Right lobe of liver (tissue), 6 donors: ENCODE measurements at regions of chr20 and their contacts with region 1.

Region 1: DNA sequence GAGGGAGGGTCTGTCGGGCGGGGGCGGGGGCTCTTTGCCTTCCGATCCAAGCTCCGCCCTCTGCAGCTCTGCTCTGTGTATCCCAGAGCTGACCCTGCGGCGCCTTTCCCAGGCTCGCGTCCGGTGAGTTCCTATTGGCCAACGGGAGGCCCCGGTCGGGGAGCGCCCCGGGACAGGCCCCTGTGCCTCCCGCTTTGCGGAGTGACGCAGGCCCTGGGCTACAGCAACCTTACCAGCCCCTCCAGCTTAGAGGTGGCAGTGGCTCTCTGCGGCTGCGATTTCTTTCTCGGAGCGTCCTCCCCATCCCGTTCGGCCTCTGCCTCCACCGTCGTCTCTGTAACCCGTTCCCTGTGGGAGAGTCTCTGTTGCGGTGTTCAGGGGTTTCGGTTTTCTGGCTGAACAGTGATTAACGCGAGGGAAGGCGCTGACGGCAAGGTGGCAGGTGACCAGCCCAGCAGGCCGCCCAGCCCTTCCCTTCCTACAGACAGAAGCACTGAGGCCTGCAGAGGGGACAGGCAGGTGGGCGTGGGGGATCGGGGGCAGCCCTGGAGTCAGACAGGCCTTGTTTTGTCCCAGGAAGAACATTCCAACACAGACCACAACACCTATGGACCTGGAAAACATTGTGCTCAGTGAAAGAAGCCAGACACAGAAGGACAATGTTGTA is 18.1 kb upstream of the CEBPB start:
- DNase-seq: peak; percentile 94 to 96 (median 96)
- ATAC-seq: peak; percentile 93 to 98 (median 96)
- H3K4me3 ChIP-seq: peak overlapping the region; percentile 46 to 64 (median 59)
- H3K27ac ChIP-seq: peak overlapping the region; percentile 86 to 95 (median 91)
- H3K4me1 ChIP-seq: peaks cover 0 to 8% (median 3%) of the 10 kb centered on the region in 4 donors
- H3K27me3 ChIP-seq: no peaks in the 10 kb centered on the region
- CTCF ChIP-seq: no peak
- POLR2A ChIP-seq: peak; percentile 87

Region 2: GRCh38 chr20:49982346-49983122 is 189.9 kb before region 1 on chr20 and contains the start of gene SNAI1:
- intact Hi-C with region 1: loop called in 1 of 2 experiments (anchors 10 kb)
- DNase-seq: peak; percentile 78 to 90 (median 87)
- ATAC-seq: peak; percentile 84 to 90 (median 86)
- H3K4me3 ChIP-seq: peak within 1 kb of the TSS; percentile 37 to 47 (median 46)
- H3K27ac ChIP-seq: peak within 1 kb of the TSS; percentile 47 to 73 (median 51)
- H3K4me1 ChIP-seq: peaks cover 0 to 19% (median 3%) of the 10 kb centered on the region in 4 donors
- H3K27me3 ChIP-seq: no peaks in the 10 kb centered on the region
- CTCF ChIP-seq: peak; percentile 45 to 62 (median 57)
- POLR2A ChIP-seq: peak; percentile 69
- total RNA-seq, gene SNAI1: 0.73 to 1.9 (median 1.1) TPM

Region 3: GRCh38 chr20:50115591-50116372 is 56.7 kb before region 1 on chr20:
- intact Hi-C with region 1: loop called (anchors 5 kb)
- DNase-seq: peak; percentile 97
- ATAC-seq: peak; percentile 85 to 92 (median 90)
- H3K4me3 ChIP-seq: peak overlapping the region; percentile 32 to 63 (median 59)
- H3K27ac ChIP-seq: peak overlapping the region; percentile 45 to 64 (median 51)
- H3K4me1 ChIP-seq: peaks cover 0 to 42% (median 18%) of the 10 kb centered on the region in 4 donors
- H3K27me3 ChIP-seq: no peaks in the 10 kb centered on the region
- CTCF ChIP-seq: no peak
- POLR2A ChIP-seq: peak; percentile 36

Region 4: DNA sequence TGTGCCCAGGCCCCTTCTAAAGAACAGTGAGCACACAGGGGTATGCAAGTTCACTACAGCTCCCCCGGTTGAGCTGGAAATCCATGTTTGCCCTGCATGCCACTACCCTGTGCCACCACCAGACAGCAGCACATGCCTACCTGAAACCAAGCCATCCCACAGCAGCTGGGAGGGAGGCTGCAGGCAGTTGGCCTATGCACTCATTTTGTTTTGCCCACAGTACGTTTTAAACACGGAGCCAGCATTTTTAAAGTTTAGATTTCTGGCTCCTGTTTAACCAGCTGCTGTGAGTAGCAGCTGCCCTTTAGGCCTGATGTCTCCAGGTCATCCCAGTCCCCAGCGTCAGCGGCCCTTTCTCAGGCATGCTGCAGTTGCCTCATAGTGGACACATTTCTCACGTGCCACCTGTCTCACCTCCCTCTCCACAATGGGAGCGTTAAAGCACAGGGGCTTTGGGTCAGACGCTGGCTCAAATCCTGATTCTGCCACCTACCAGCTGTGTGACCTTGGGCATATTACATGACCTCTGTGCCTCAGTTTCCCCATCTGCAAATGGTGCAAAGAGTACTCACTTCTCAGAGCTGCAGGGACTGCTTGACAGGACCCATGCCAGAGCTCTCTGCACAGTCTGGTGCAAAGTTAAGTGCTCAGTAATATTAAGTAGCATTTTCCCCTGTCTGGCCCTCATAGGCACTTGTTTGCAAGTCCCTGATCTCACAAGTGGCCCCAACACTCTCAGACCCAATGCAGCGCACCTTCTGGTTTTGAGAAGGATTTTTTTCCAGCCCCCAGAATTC is 51.4 kb before region 1 on chr20:
- intact Hi-C with region 1: loop called (anchors 5 kb)
- DNase-seq: peak; percentile 71 to 86 (median 85)
- ATAC-seq: peak; percentile 78 to 88 (median 84)
- H3K4me3 ChIP-seq: no peak overlapping the region
- H3K27ac ChIP-seq: peak overlapping the region; percentile 29 to 84 (median 56)
- H3K4me1 ChIP-seq: peaks cover 0 to 51% (median 19%) of the 10 kb centered on the region in 4 donors
- H3K27me3 ChIP-seq: no peaks in the 10 kb centered on the region
- CTCF ChIP-seq: peak; percentile 84 to 96 (median 90)
- POLR2A ChIP-seq: no peak

Region 5: GRCh38 chr20:50516180-50516934 is 343.9 kb after region 1 on chr20:
- intact Hi-C with region 1: no loop called
- DNase-seq: no peak
- ATAC-seq: peak in 2 of 4 donors; percentile 35 to 49
- H3K4me3 ChIP-seq: no peak overlapping the region
- H3K27ac ChIP-seq: no peak overlapping the region
- H3K4me1 ChIP-seq: peaks cover 0 to 58% (median 22%) of the 10 kb centered on the region in 4 donors
- H3K27me3 ChIP-seq: no peaks in the 10 kb centered on the region
- CTCF ChIP-seq: no peak
- POLR2A ChIP-seq: no peak